Thyroid gland (tissue), 4 donors: ENCODE measurements at regions of chr18 and their contacts with region 1.

Region 1: GRCh38 chr18:77071711-77072292 is 60.8 kb downstream of the MBP start:
- DNase-seq: peak; percentile 80 to 83
- H3K4me3 ChIP-seq: no peak overlapping the region
- H3K27ac ChIP-seq: peak overlapping the region; percentile 73 to 89 (median 76)
- H3K4me1 ChIP-seq: peaks cover 38 to 62% of the 10 kb centered on the region in 2 donors
- H3K27me3 ChIP-seq: no peaks in the 10 kb centered on the region
- CTCF ChIP-seq: no peak
- POLR2A ChIP-seq: no peak

Region 2: DNA sequence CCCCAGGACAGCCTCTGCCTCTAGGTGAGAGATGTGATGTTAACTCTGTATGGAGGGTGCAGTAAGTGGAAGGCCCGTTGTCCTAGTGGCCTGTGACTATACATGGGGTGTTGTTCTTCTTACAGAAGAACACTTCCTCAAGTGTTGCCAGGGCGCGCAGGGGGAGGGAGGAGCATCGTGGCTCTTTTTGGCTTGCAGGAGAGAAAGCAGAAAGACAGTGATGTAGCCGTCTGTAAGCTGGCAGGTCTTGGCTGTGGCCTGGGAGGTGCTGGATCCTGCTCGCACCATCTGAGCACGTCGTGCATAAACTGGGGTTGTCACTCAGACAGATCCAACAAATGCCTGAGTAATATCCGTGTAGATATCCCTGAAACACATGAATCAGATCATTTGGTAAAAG is 205.1 kb before region 1 on chr18:
- intact Hi-C with region 1: no loop called
- DNase-seq: no peak
- H3K4me3 ChIP-seq: no peak overlapping the region
- H3K27ac ChIP-seq: no peak overlapping the region
- H3K4me1 ChIP-seq: no peaks in the 10 kb centered on the region
- H3K27me3 ChIP-seq: no peaks in the 10 kb centered on the region
- CTCF ChIP-seq: no peak
- POLR2A ChIP-seq: no peak

Region 3: GRCh38 chr18:77132371-77133050 is 60.7 kb after region 1 on chr18 and contains the start of gene MBP:
- intact Hi-C with region 1: loop called (anchors 10 kb)
- DNase-seq: peak; percentile 90 to 91
- H3K4me3 ChIP-seq: peak within 1 kb of the TSS; percentile 62 to 97 (median 90)
- H3K27ac ChIP-seq: peak within 1 kb of the TSS; percentile 92 to 99 (median 99)
- H3K4me1 ChIP-seq: peaks cover 27 to 52% of the 10 kb centered on the region in 2 donors
- H3K27me3 ChIP-seq: no peaks in the 10 kb centered on the region
- CTCF ChIP-seq: no peak
- POLR2A ChIP-seq: peak; percentile 69 to 97
- total RNA-seq, gene MBP: 44.0 to 68.0 (median 60.2) TPM